SK-N-SH (cell line): ENCODE measurements at regions of chr7 and their contacts with region 1.

Region 1: DNA sequence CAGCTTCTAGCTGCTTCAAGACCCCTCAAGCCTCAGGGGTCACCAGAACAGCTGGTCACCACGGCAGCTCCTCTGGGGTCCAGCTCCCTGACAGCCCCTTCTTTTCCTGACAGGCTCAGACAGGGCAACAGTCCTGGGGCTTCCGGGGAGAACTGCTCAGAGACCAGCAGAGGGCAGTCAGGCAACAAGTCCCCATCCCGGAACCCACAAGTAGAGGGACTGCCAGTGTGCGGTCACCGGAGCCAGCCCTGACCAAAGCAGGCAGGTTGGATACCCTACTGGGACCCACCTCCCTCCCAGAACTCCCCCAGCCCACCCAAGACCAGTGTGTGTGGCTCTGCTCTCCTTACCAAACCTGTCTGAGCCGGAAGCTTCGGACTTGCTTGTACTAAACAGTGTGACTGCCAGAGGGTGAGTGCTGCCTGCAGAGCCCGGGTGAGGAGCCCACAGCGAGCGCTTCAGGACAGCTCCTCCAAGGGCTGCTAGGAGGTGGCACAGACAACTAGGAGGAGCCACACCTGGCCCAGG is 40.3 kb downstream of the YKT6 start:
- DNase-seq: peak; percentile 96
- H3K4me3 ChIP-seq: no peak overlapping the region
- H3K27ac ChIP-seq: no peak overlapping the region
- H3K4me1 ChIP-seq: peaks cover 0 to 32% of the 10 kb centered on the region in 2 experiments; a peak in 1 of 4 replicates
- H3K27me3 ChIP-seq: no peaks in the 10 kb centered on the region
- CTCF ChIP-seq: peak; percentile 92
- EP300 ChIP-seq: no peak
- RAD21 ChIP-seq: peak; percentile 95

Region 2: GRCh38 chr7:44143646-44144250 is 97.3 kb before region 1 on chr7:
- CTCF ChIA-PET with region 1: no interaction called
- POLR2A ChIA-PET with region 1: no interaction called
- DNase-seq: peak; percentile 33
- H3K4me3 ChIP-seq: no peak overlapping the region
- H3K27ac ChIP-seq: no peak overlapping the region
- H3K4me1 ChIP-seq: peaks cover 0 to 15% of the 10 kb centered on the region in 2 experiments; a peak in 1 of 4 replicates
- H3K27me3 ChIP-seq: no peaks in the 10 kb centered on the region
- CTCF ChIP-seq: no peak
- EP300 ChIP-seq: no peak
- RAD21 ChIP-seq: no peak

Region 3: GRCh38 chr7:44229546-44230105 is 11.4 kb before region 1 on chr7:
- CTCF ChIA-PET with region 1: interaction called, 70 read pairs
- POLR2A ChIA-PET with region 1: interaction called, 4 read pairs
- DNase-seq: no peak
- H3K4me3 ChIP-seq: no peak overlapping the region
- H3K27ac ChIP-seq: no peak overlapping the region
- H3K4me1 ChIP-seq: peaks cover 0 to 20% of the 10 kb centered on the region in 2 experiments; a peak in 1 of 4 replicates
- H3K27me3 ChIP-seq: no peaks in the 10 kb centered on the region
- CTCF ChIP-seq: no peak
- EP300 ChIP-seq: no peak
- RAD21 ChIP-seq: no peak

Region 4: DNA sequence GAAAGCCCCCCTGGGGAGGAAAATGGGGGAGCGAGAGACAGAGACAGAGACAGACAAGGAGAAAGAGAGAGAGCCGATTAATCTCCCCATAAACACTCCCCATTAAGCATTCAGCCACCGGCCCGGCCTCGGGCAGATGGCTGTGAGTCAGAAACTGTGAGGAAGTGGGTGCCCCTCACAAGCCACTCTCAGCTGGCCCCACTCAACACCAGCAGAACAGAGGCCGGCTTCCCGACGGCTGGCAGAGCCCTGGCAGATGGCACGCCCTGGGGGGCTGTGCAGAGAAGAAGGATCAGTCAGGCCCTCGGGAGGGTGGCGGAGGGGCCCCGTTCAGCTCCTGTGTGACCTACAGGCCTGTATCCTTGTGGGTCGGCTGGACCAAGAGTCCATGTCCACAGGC is 43.2 kb after region 1 on chr7:
- CTCF ChIA-PET with region 1: interaction called, 34 read pairs
- POLR2A ChIA-PET with region 1: no interaction called
- DNase-seq: peak; percentile 62
- H3K4me3 ChIP-seq: no peak overlapping the region
- H3K27ac ChIP-seq: peak overlapping the region in 1 of 2 experiments; percentile 12; a peak in 1 of 4 replicates
- H3K4me1 ChIP-seq: peaks cover 0 to 65% of the 10 kb centered on the region in 2 experiments; a peak in 1 of 4 replicates
- H3K27me3 ChIP-seq: no peaks in the 10 kb centered on the region
- CTCF ChIP-seq: no peak
- EP300 ChIP-seq: no peak
- RAD21 ChIP-seq: no peak

Region 5: DNA sequence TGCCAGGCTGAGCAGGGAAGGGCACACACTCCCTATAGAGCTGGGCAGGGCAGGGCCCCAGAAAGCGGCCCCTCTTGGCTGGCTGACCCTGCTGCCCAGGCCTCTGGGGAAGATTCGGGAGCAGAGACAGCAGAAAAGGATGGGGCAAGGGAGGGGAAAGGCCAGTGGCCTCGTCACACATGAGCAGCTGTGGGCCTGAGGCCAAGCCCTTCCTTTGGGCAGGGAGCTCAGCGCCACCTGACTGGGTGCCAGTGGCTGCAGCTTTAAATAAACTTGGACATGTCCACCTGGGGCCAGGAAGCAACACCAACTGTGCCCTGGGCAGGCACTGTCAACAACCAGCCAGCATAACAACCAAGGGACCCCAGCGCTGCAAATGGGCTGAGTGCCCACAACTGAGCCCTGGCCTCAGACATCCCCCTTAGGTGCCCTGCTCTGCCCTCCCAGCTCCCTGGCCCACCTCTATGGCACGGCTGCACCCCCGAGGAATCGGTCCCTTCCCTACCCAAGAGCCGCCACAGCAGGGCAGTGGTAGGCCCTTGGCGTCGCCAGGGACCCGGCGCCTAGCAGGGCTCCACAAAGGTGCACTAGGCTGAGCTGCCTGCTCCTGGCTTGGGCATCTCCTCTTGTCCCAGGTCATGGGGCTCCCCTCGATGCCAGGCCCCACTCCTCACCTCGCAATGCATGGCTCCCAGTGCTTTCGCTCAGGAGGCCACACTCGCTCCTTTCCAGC is 81.8 kb after region 1 on chr7:
- CTCF ChIA-PET with region 1: interaction called, 73 read pairs
- POLR2A ChIA-PET with region 1: no interaction called
- DNase-seq: peak; percentile 47
- H3K4me3 ChIP-seq: no peak overlapping the region
- H3K27ac ChIP-seq: no peak overlapping the region
- H3K4me1 ChIP-seq: peaks cover 0 to 36% of the 10 kb centered on the region in 2 experiments; a peak in 2 of 4 replicates
- H3K27me3 ChIP-seq: peaks cover 38% of the 10 kb centered on the region
- CTCF ChIP-seq: no peak
- EP300 ChIP-seq: no peak
- RAD21 ChIP-seq: no peak

Region 6: GRCh38 chr7:44379366-44380188 is 138.5 kb after region 1 on chr7:
- CTCF ChIA-PET with region 1: interaction called, 11 read pairs
- POLR2A ChIA-PET with region 1: no interaction called
- DNase-seq: peak; percentile 29
- H3K4me3 ChIP-seq: no peak overlapping the region
- H3K27ac ChIP-seq: peak overlapping the region in 1 of 2 experiments; percentile 52; a peak in 1 of 4 replicates
- H3K4me1 ChIP-seq: peaks cover 0 to 24% of the 10 kb centered on the region in 2 experiments; a peak in 2 of 4 replicates
- H3K27me3 ChIP-seq: no peaks in the 10 kb centered on the region
- CTCF ChIP-seq: no peak
- EP300 ChIP-seq: no peak
- RAD21 ChIP-seq: no peak

Region 7: GRCh38 chr7:44490351-44491200 is 249.5 kb after region 1 on chr7 and contains the start of gene NUDCD3:
- CTCF ChIA-PET with region 1: interaction called, 16 read pairs
- POLR2A ChIA-PET with region 1: interaction called, 4 read pairs
- DNase-seq: peak; percentile 97
- H3K4me3 ChIP-seq: peak within 1 kb of the TSS; percentile 96 to 98
- H3K27ac ChIP-seq: peak within 1 kb of the TSS; percentile 98 to 99
- H3K4me1 ChIP-seq: peaks cover 10 to 22% of the 10 kb centered on the region in 2 experiments; a peak in 3 of 4 replicates
- H3K27me3 ChIP-seq: no peaks in the 10 kb centered on the region
- CTCF ChIP-seq: peak; percentile 47
- EP300 ChIP-seq: peak in 1 of 2 experiments; percentile 3; a peak in 1 of 4 replicates
- RAD21 ChIP-seq: no peak
- polyA plus RNA-seq, gene NUDCD3: 66.0 and 83.1 TPM in 2 replicates

Region 8: DNA sequence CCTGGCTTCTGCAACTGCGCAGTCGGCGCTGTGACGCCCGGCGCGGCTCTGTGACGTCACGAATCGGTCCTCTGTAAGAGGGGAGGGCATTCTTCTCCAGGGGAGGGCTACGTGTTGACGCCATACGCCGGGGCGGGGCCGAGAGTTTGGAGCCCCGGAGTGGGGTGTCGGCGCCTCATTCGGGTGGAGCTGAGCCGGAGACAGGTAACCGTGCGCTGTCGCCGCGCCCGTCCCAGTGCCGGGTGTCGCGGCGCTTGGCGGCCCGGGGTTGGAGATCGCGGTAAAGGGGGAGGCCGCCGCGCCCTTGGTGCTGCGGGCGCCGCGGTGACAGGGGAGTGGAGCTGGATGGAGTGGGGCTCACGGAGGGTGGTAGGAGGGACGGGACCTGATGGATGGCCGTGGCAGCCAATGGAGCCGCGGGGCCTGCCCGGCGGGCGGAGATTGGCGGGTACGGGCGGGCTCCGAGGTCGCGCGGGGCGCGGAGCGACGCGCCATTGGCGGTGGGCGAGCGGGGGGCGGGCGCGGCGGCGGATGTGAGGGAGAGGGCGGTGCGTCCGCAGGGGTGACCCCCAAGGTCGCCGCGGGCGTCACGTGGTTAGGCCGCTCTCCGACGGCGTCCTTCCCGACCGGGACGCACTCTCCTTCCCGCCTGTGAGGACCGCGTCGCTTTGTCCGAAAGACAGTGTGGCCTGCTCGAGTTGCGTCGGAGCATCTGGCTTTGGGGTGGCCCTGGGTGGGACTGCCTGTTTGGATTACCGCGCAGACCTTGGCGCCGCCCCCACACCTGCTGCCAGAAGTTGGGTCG is 365.6 kb after region 1 on chr7 and contains the start of gene OGDH:
- CTCF ChIA-PET with region 1: no interaction called
- POLR2A ChIA-PET with region 1: no interaction called
- DNase-seq: peak; percentile 100
- H3K4me3 ChIP-seq: peak within 1 kb of the TSS; percentile 62 to 87
- H3K27ac ChIP-seq: peak within 1 kb of the TSS; percentile 76 to 89
- H3K4me1 ChIP-seq: peaks cover 0 to 5% of the 10 kb centered on the region in 2 experiments; a peak in 2 of 4 replicates
- H3K27me3 ChIP-seq: no peaks in the 10 kb centered on the region
- CTCF ChIP-seq: no peak
- EP300 ChIP-seq: 0 out of 4 replicates have a peak, but pooled peaks of 1 of the 2 experiments have one; percentile 8
- RAD21 ChIP-seq: no peak
- polyA plus RNA-seq, gene OGDH: 58.2 and 69.4 TPM in 2 replicates